ENCODE measurements at regions of chr16 and their contacts with region 1.

Region 1: DNA sequence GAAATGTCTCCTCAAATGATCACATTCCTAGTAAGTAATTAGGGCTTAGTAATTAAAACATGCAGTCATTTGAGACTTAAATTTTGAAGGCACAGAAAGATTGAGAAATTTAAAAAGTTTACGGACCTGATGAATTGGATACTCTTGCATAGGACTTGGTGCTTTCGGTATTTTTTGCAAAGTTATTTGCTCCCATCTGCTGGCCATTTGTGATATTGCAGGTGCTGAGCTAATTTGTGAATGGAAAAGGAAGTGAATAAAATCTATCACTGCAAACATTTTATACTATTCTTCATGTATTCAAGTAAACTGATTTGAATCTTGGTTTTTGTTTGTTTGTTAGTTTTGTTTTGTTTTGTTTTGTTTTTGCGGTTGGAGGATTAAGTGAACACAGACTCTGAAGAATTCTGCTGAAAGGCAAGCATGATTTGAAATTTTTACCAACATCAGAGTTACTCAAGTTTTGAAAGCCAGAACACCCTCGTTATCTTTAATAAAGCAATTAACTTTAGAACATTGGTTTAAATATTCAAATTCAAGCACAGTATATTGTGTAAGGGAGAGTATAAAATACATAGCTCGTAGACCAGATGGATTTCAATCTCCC is 689.5 kb upstream of the RBFOX1 start:
- DNase-seq: peak; percentile 63
- ATAC-seq: no peak
- H3K4me3 Mint-ChIP-seq: no peak overlapping the region
- H3K27ac Mint-ChIP-seq: no peak overlapping the region
- H3K4me1 Mint-ChIP-seq: peaks cover 3% of the 10 kb centered on the region
- H3K27me3 Mint-ChIP-seq: peaks cover 9% of the 10 kb centered on the region

Region 2: GRCh38 chr16:5234295-5235050 is 1408.7 kb before region 1 on chr16:
- CTCF ChIA-PET with region 1: no interaction called
- POLR2A ChIA-PET with region 1: no interaction called
- intact Hi-C with region 1: loop called in 1 of 2 experiments (anchors 1 kb)
- DNase-seq: no peak
- ATAC-seq: no peak
- H3K4me3 Mint-ChIP-seq: no peak overlapping the region
- H3K27ac Mint-ChIP-seq: no peak overlapping the region
- H3K4me1 Mint-ChIP-seq: peaks cover 3% of the 10 kb centered on the region
- H3K27me3 Mint-ChIP-seq: peaks cover 25% of the 10 kb centered on the region

Region 3: GRCh38 chr16:5502467-5502869 is 1140.7 kb before region 1 on chr16:
- CTCF ChIA-PET with region 1: no interaction called
- POLR2A ChIA-PET with region 1: no interaction called
- intact Hi-C with region 1: loop called in 1 of 2 experiments (anchors 5 kb)
- DNase-seq: peak; percentile 21
- ATAC-seq: no peak
- H3K4me3 Mint-ChIP-seq: no peak overlapping the region
- H3K27ac Mint-ChIP-seq: no peak overlapping the region
- H3K4me1 Mint-ChIP-seq: no peaks in the 10 kb centered on the region
- H3K27me3 Mint-ChIP-seq: peaks cover 5% of the 10 kb centered on the region

Region 4: DNA sequence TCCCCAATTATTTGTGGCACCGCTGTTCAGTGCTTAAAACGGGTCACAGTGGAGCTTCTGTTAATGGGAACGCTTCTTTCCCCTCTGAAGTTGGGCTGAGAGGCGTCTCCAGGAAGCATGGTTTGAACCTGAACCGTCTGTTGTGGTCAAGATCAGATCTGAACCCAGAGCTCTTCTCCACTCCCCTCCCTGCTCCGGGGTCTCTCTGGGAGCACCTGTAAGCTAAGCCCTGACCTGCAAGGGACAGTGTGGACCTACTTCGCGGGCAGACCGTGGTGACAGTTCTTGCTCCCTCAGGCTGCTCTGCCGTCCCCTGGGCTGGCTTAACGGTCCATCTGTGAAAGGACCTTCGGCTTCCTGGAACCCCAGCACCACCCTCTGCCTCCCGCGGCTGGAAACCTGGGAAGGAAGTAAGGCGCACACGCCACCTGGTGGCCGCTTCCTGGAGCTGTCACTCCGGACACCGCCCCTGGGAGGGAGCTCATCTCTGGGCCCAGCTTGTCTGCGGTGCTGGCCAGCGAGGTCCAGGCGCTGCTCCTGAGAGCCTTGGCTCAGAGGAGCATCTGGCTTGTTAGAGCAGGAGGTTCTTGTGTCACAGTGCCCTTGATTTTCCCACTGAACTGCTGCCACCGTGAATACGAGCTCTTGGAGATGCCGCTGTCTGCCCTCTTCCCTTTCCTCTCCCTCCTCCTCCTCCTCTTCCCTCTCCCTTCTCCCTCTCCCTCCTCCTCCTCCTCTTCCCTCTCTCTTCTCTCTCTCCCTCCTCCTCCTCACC is 1027.1 kb before region 1 on chr16:
- CTCF ChIA-PET with region 1: interaction called, 6 read pairs
- POLR2A ChIA-PET with region 1: no interaction called
- intact Hi-C with region 1: loop called in 1 of 2 experiments (anchors 5 kb)
- DNase-seq: peak; percentile 68
- ATAC-seq: peak; percentile 60
- H3K4me3 Mint-ChIP-seq: no peak overlapping the region
- H3K27ac Mint-ChIP-seq: no peak overlapping the region
- H3K4me1 Mint-ChIP-seq: no peaks in the 10 kb centered on the region
- H3K27me3 Mint-ChIP-seq: peaks cover 21% of the 10 kb centered on the region

Region 5: DNA sequence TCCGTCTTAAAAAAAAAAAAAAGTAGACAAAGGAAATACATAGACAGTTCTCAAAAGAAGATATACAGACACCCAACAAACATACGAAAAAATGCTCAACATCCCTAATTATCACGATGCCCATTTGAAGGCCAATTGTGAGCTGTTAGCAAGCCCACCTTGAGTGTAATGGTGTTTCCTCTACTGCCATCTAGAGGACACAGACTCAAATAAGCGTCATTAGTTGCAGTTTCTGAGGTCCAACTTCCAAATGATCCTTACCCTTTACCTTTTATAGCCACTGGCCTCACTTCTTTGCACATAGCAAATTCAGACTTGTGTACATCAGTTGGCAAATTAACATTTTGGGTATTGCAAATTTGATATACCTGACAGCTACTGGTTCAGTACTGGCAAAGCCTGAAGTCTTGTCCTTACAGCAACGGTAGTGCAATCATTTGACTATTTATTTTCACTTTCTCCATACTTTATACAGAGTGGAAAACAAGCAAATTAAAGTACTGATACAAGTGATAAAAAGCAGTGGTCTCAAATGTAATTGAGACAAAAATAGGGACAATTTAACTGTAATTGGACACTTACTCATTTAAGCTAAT is 1009.2 kb before region 1 on chr16:
- CTCF ChIA-PET with region 1: no interaction called
- POLR2A ChIA-PET with region 1: no interaction called
- intact Hi-C with region 1: loop called in 1 of 2 experiments (anchors 5 kb)
- DNase-seq: no peak
- ATAC-seq: no peak
- H3K4me3 Mint-ChIP-seq: no peak overlapping the region
- H3K27ac Mint-ChIP-seq: no peak overlapping the region
- H3K4me1 Mint-ChIP-seq: no peaks in the 10 kb centered on the region
- H3K27me3 Mint-ChIP-seq: no peaks in the 10 kb centered on the region

Region 6: GRCh38 chr16:6016530-6017184 is 626.5 kb before region 1 on chr16:
- CTCF ChIA-PET with region 1: interaction called, 5 read pairs
- POLR2A ChIA-PET with region 1: no interaction called
- intact Hi-C with region 1: loop called in 1 of 2 experiments (anchors 5 kb)
- DNase-seq: no peak
- ATAC-seq: no peak
- H3K4me3 Mint-ChIP-seq: no peak overlapping the region
- H3K27ac Mint-ChIP-seq: no peak overlapping the region
- H3K4me1 Mint-ChIP-seq: no peaks in the 10 kb centered on the region
- H3K27me3 Mint-ChIP-seq: peaks cover 19% of the 10 kb centered on the region

Region 7: GRCh38 chr16:6331770-6332169 is 311.4 kb before region 1 on chr16:
- CTCF ChIA-PET with region 1: no interaction called
- POLR2A ChIA-PET with region 1: no interaction called
- intact Hi-C with region 1: no loop called
- DNase-seq: no peak
- ATAC-seq: no peak
- H3K4me3 Mint-ChIP-seq: no peak overlapping the region
- H3K27ac Mint-ChIP-seq: no peak overlapping the region
- H3K4me1 Mint-ChIP-seq: no peaks in the 10 kb centered on the region
- H3K27me3 Mint-ChIP-seq: no peaks in the 10 kb centered on the region

Region 8: DNA sequence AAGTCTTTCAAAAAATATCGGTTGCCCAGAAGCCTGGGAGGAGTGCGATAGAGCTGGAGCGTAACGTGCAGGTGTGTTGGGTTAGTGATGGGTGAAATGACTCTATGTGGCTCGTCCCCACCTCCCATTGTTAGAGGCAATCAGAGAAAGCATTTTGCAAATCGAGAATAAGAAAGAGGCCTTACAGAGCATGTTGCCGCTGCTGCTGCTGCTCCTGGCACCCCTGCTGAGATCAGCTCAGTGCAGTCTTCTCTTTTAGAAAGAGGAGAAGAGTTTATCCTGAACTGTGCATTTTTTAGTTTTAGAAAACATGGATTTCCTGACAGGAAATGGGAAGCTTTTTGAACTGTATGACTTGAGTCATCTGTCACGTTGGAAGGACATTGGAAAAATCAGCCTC is 85.1 kb before region 1 on chr16:
- CTCF ChIA-PET with region 1: no interaction called
- POLR2A ChIA-PET with region 1: no interaction called
- intact Hi-C with region 1: no loop called
- DNase-seq: no peak
- ATAC-seq: no peak
- H3K4me3 Mint-ChIP-seq: no peak overlapping the region
- H3K27ac Mint-ChIP-seq: no peak overlapping the region
- H3K4me1 Mint-ChIP-seq: no peaks in the 10 kb centered on the region
- H3K27me3 Mint-ChIP-seq: no peaks in the 10 kb centered on the region

Region 9: DNA sequence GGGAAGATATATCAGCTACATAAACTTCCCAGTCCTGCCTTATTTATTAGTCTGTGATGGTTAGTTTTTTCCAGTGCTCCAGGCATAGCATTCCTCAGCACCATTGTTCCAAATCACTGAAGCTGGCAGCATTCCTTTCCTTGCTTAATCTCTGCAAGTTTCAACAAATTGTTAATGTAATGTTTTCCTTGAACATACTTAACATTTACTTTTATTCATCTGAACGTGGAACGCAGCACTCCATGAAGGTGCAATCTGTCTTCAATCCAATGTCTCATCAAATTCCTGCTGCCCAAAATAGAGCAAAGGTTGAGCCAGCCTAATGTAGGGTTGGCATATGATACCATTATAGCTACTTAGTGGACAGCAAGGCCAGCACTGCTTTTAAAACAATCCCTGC is 248.3 kb after region 1 on chr16:
- CTCF ChIA-PET with region 1: no interaction called
- POLR2A ChIA-PET with region 1: no interaction called
- intact Hi-C with region 1: no loop called
- DNase-seq: no peak
- ATAC-seq: no peak
- H3K4me3 Mint-ChIP-seq: no peak overlapping the region
- H3K27ac Mint-ChIP-seq: no peak overlapping the region
- H3K4me1 Mint-ChIP-seq: no peaks in the 10 kb centered on the region
- H3K27me3 Mint-ChIP-seq: no peaks in the 10 kb centered on the region